Naive thymus-derived CD4-positive, alpha-beta T cell (primary cell): ENCODE measurements at regions of chr5 and their contacts with region 1.

Region 1: GRCh38 chr5:74919487-74919886 is 53.3 kb upstream of the FAM169A start:
- DNase-seq: peak in 7 of 9 donors; percentile 12 to 54 (median 29)
- ATAC-seq: peak; percentile 80
- H3K4me3 ChIP-seq: no peak overlapping the region
- H3K4me3 Mint-ChIP-seq: no peak overlapping the region
- H3K27ac ChIP-seq: no peak overlapping the region
- H3K27ac Mint-ChIP-seq: no peak overlapping the region
- H3K4me1 ChIP-seq: no peaks in the 10 kb centered on the region
- H3K4me1 Mint-ChIP-seq: no peaks in the 10 kb centered on the region
- H3K27me3 ChIP-seq: no peaks in the 10 kb centered on the region
- H3K27me3 Mint-ChIP-seq: peaks cover 0 to 6% (median 4%) of the 10 kb centered on the region in 5 donors

Region 2: DNA sequence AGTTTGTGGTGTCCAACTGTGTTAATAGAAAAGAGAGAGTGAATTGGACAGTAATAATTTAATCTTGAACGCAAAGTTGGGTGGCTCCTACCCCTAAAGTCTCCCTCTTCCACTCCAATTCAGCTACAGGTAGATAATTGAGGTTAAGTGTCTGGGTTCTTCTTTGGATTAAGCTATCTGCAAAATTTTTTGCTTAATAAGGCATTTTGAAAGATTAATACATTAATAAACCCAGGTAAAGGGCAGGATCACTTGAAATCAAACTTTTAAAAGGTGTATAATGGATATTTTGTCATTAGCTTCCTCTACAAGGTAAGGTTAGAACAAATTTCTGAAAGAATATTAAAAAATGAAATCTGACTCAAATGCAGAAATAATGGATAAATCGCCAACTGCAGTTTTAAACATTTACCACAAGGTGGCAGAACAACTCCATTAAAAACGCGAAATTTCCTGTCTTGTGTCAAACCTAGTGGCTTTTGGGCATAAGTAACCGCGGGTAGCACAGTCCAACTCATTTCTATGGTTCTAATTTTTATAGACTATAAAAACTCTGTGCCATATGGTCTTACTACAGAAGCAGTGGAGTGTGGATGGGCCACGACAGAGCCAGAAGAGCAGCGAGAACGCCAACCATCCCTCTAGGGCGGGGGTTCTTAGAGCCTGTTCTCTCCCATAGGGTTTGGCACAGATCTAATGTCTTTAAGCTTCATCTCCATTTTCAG is 1017.0 kb before region 1 on chr5:
- CTCF ChIA-PET with region 1: interaction called, 3 read pairs
- POLR2A ChIA-PET with region 1: no interaction called
- intact Hi-C with region 1: loop called (anchors 1 kb)
- DNase-seq: peak in 7 of 9 donors; percentile 10 to 56 (median 51)
- ATAC-seq: no peak
- H3K4me3 ChIP-seq: no peak overlapping the region
- H3K4me3 Mint-ChIP-seq: no peak overlapping the region
- H3K27ac ChIP-seq: no peak overlapping the region
- H3K27ac Mint-ChIP-seq: no peak overlapping the region
- H3K4me1 ChIP-seq: no peaks in the 10 kb centered on the region
- H3K4me1 Mint-ChIP-seq: peaks cover 0 to 5% (median 0%) of the 10 kb centered on the region in 7 donors
- H3K27me3 ChIP-seq: no peaks in the 10 kb centered on the region
- H3K27me3 Mint-ChIP-seq: peaks cover 9 to 35% (median 29%) of the 10 kb centered on the region in 5 donors

Region 3: DNA sequence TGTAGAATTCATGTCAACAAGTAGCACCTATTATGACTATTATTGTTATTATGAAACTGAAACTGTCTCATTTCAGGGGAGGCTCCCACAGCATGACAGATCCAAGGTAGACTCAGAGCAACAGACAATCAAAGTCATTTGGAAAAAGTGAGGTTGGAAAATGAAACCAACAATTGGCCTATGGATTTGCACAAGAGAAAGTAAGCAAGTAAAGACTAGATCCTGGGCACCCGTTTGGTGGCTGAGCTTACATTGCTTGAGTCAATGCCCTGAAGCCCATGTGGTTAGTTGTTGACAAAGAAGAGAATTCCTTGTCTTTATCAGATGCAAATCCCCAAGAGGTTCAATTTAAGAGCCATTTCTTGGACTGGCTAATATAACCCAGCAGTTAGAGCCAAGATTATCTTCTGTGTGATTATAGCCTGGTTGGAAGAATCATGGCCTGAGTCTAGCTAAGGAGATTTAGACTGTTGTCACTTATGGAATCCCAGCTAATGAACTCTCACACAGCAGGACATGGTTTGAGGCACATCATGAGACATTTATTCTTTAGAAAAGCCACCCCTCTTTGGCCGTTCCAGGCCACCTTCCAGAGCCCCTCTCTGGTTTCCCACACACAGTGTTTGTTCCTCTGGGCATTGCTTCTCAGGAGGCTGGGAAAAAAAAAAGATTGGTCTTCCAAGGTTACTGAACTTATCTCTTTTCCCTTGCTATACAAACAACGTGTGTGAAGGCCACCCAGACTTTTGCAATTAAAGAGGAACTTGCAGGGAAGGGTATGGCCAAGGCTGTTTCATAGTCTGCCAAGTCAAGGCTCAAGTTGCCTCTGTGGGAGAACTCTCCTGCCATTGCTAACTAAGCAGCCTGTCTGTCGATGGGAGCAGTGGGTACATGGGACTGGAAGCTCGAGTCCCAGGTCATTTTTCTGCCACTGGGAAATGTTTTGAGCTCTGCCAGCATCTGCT is 678.4 kb before region 1 on chr5:
- CTCF ChIA-PET with region 1: no interaction called
- POLR2A ChIA-PET with region 1: no interaction called
- intact Hi-C with region 1: no loop called
- DNase-seq: no peak
- ATAC-seq: peak; percentile 44
- H3K4me3 ChIP-seq: no peak overlapping the region
- H3K4me3 Mint-ChIP-seq: no peak overlapping the region
- H3K27ac ChIP-seq: no peak overlapping the region
- H3K27ac Mint-ChIP-seq: no peak overlapping the region
- H3K4me1 ChIP-seq: no peaks in the 10 kb centered on the region
- H3K4me1 Mint-ChIP-seq: peaks cover 0 to 3% (median 0%) of the 10 kb centered on the region in 7 donors
- H3K27me3 ChIP-seq: peaks cover 0 to 6% of the 10 kb centered on the region in 2 donors
- H3K27me3 Mint-ChIP-seq: peaks cover 2 to 29% (median 17%) of the 10 kb centered on the region in 5 donors

Region 4: GRCh38 chr5:74673011-74673790 is 246.3 kb before region 1 on chr5:
- CTCF ChIA-PET with region 1: no interaction called
- POLR2A ChIA-PET with region 1: no interaction called
- intact Hi-C with region 1: loop called in 1 of 2 experiments (anchors 1 kb)
- DNase-seq: peak in 5 of 9 donors; percentile 8 to 30 (median 21)
- ATAC-seq: no peak
- H3K4me3 ChIP-seq: no peak overlapping the region
- H3K4me3 Mint-ChIP-seq: no peak overlapping the region
- H3K27ac ChIP-seq: no peak overlapping the region
- H3K27ac Mint-ChIP-seq: no peak overlapping the region
- H3K4me1 ChIP-seq: no peaks in the 10 kb centered on the region
- H3K4me1 Mint-ChIP-seq: peaks cover 0 to 2% (median 0%) of the 10 kb centered on the region in 7 donors
- H3K27me3 ChIP-seq: no peaks in the 10 kb centered on the region
- H3K27me3 Mint-ChIP-seq: peaks cover 9 to 31% (median 15%) of the 10 kb centered on the region in 5 donors

Region 5: GRCh38 chr5:74684900-74685851 is 234.3 kb before region 1 on chr5 and contains the start of gene HEXB:
- CTCF ChIA-PET with region 1: no interaction called
- POLR2A ChIA-PET with region 1: no interaction called
- intact Hi-C with region 1: loop called in 1 of 2 experiments (anchors 5 kb)
- DNase-seq: peak; percentile 55 to 89 (median 69)
- ATAC-seq: peak; percentile 91
- H3K4me3 ChIP-seq: peak within 1 kb of the TSS; percentile 86
- H3K4me3 Mint-ChIP-seq: peak within 1 kb of the TSS; percentile 76 to 92 (median 86)
- H3K27ac ChIP-seq: peak within 1 kb of the TSS; percentile 78
- H3K27ac Mint-ChIP-seq: peak within 1 kb of the TSS; percentile 76 to 92 (median 86)
- H3K4me1 ChIP-seq: peaks cover 7 to 13% of the 10 kb centered on the region in 2 donors
- H3K4me1 Mint-ChIP-seq: peaks cover 16 to 34% (median 30%) of the 10 kb centered on the region in 7 donors
- H3K27me3 ChIP-seq: no peaks in the 10 kb centered on the region
- H3K27me3 Mint-ChIP-seq: peaks cover 0 to 17% (median 0%) of the 10 kb centered on the region in 5 donors
- total RNA-seq, gene HEXB: 37.7 to 88.9 (median 64.2) TPM

Region 6: DNA sequence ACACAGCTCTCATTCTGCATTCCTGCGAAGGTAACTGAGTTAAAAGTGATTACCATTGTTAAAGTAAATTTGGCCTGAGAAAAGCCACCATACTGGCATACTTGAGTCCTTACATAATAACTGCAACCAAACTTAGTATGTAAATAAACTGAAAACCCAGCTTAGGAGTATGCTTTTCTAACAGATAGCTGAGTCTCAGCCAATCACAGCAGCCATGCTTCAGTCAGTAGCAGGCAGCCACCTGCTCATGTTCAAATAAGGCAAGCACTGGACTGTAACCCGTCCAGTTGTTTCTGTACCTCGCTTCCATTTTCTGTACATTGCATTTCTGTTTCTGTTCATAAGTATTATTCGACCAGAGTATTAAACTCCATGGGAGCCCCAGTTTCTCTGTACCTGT is 74.3 kb after region 1 on chr5:
- CTCF ChIA-PET with region 1: no interaction called
- POLR2A ChIA-PET with region 1: no interaction called
- intact Hi-C with region 1: no loop called
- DNase-seq: no peak
- ATAC-seq: no peak
- H3K4me3 ChIP-seq: no peak overlapping the region
- H3K4me3 Mint-ChIP-seq: no peak overlapping the region
- H3K27ac ChIP-seq: no peak overlapping the region
- H3K27ac Mint-ChIP-seq: no peak overlapping the region
- H3K4me1 ChIP-seq: no peaks in the 10 kb centered on the region
- H3K4me1 Mint-ChIP-seq: peaks cover 0 to 1% (median 0%) of the 10 kb centered on the region in 7 donors
- H3K27me3 ChIP-seq: no peaks in the 10 kb centered on the region
- H3K27me3 Mint-ChIP-seq: peaks cover 0 to 6% (median 0%) of the 10 kb centered on the region in 5 donors

Region 7: DNA sequence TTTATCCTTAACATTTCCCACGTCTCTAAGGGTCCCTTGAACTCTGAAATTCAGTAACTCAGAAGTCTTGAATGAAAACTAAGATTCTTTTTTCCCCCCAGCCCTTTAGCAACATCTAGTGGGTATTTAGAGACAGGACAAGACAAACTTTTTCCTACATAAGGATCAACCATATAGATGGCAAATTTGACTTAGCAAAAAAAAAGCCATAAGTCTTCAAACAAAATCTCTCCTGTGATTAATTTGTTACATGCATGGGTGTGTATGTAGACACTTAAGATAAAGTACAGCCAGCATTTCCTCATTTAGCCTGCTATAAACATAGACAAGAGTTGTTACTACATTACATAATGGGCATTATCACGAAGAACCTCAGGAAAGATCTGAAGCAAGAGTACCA is 346.2 kb after region 1 on chr5:
- CTCF ChIA-PET with region 1: interaction called, 21 read pairs
- POLR2A ChIA-PET with region 1: no interaction called
- intact Hi-C with region 1: no loop called
- DNase-seq: peak in 7 of 9 donors; percentile 27 to 65 (median 55)
- ATAC-seq: peak; percentile 75
- H3K4me3 ChIP-seq: no peak overlapping the region
- H3K4me3 Mint-ChIP-seq: no peak overlapping the region
- H3K27ac ChIP-seq: no peak overlapping the region
- H3K27ac Mint-ChIP-seq: peak overlapping the region in 1 of 9 donors; percentile 56
- H3K4me1 ChIP-seq: no peaks in the 10 kb centered on the region
- H3K4me1 Mint-ChIP-seq: peaks cover 0 to 5% (median 0%) of the 10 kb centered on the region in 7 donors
- H3K27me3 ChIP-seq: no peaks in the 10 kb centered on the region
- H3K27me3 Mint-ChIP-seq: peaks cover 0 to 11% (median 4%) of the 10 kb centered on the region in 5 donors